Naive thymus-derived CD4-positive, alpha-beta T cell (primary cell): ENCODE measurements at regions of chr10 and their contacts with region 1.

Region 1: GRCh38 chr10:35195361-35196306 is 69.0 kb downstream of the CREM start:
- DNase-seq: peak; percentile 47 to 97 (median 93)
- ATAC-seq: peak; percentile 91
- H3K4me3 ChIP-seq: peak overlapping the region; percentile 65
- H3K4me3 Mint-ChIP-seq: peak overlapping the region; percentile 78 to 95 (median 85)
- H3K27ac ChIP-seq: peak overlapping the region; percentile 98
- H3K27ac Mint-ChIP-seq: peak overlapping the region; percentile 96 to 100 (median 99)
- H3K4me1 ChIP-seq: peaks cover 5 to 7% of the 10 kb centered on the region in 2 donors
- H3K4me1 Mint-ChIP-seq: peaks cover 0 to 56% (median 21%) of the 10 kb centered on the region in 7 donors
- H3K27me3 ChIP-seq: no peaks in the 10 kb centered on the region
- H3K27me3 Mint-ChIP-seq: no peaks in the 10 kb centered on the region

Region 2: DNA sequence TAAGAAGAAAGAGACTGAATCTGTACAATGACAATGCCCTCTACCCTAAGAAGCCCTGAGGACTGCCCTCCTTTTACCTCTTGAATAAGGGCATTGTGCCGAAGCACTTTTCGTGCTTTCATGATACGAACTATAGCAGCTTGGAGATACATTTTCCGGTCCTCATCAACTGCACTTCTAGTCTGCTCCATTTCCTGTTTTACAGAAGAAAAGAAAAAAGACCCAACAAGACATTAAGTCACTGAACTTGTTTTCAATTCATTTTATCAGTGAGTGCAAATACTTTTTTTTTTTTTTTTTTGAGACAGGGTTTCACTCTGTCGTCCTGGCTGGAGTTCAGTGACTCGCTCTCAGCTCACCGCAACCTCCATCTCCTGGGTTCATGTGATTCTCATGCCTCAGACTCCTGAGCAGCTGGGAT is 183.9 kb before region 1 on chr10:
- CTCF ChIA-PET with region 1: no interaction called
- POLR2A ChIA-PET with region 1: no interaction called
- intact Hi-C with region 1: loop called in 1 of 2 experiments (anchors 5 kb)
- DNase-seq: peak in 7 of 9 donors; percentile 31 to 67 (median 59)
- ATAC-seq: peak; percentile 71
- H3K4me3 ChIP-seq: no peak overlapping the region
- H3K4me3 Mint-ChIP-seq: peak overlapping the region in 9 of 10 donors; percentile 46 to 83 (median 69)
- H3K27ac ChIP-seq: peak overlapping the region; percentile 61
- H3K27ac Mint-ChIP-seq: peak overlapping the region; percentile 39 to 98 (median 94)
- H3K4me1 ChIP-seq: peaks cover 0 to 10% of the 10 kb centered on the region in 2 donors
- H3K4me1 Mint-ChIP-seq: peaks cover 0 to 28% (median 17%) of the 10 kb centered on the region in 7 donors
- H3K27me3 ChIP-seq: no peaks in the 10 kb centered on the region
- H3K27me3 Mint-ChIP-seq: no peaks in the 10 kb centered on the region

Region 3: DNA sequence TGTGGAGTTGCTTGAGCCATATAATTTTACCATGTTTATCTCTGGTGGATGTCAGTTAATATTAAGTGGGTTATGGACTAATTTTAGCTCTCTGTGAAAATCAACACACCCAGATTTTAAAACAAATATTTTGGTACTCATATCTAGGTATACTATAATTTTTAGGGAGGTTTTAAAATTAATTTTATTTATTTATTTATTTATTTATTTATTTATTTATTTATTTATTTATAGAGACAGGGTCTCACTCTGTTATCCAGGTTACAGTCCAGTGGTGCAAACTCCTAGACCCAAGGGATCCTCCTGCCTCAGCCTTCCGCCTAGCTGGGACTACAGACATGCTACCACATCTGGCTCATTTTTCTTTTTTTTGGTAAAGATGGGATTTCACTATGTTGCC is 76.3 kb before region 1 on chr10:
- CTCF ChIA-PET with region 1: interaction called, 12 read pairs
- POLR2A ChIA-PET with region 1: interaction called, 6 read pairs
- intact Hi-C with region 1: loop called in 1 of 2 experiments (anchors 1 kb)
- DNase-seq: no peak
- ATAC-seq: no peak
- H3K4me3 ChIP-seq: no peak overlapping the region
- H3K4me3 Mint-ChIP-seq: no peak overlapping the region
- H3K27ac ChIP-seq: no peak overlapping the region
- H3K27ac Mint-ChIP-seq: peak overlapping the region in 1 of 9 donors; percentile 52
- H3K4me1 ChIP-seq: no peaks in the 10 kb centered on the region
- H3K4me1 Mint-ChIP-seq: peaks cover 0 to 13% (median 0%) of the 10 kb centered on the region in 7 donors
- H3K27me3 ChIP-seq: no peaks in the 10 kb centered on the region
- H3K27me3 Mint-ChIP-seq: peaks cover 0 to 10% (median 0%) of the 10 kb centered on the region in 5 donors

Region 4: GRCh38 chr10:35136263-35136815 is 59.3 kb before region 1 on chr10:
- CTCF ChIA-PET with region 1: no interaction called
- POLR2A ChIA-PET with region 1: interaction called, 23 read pairs
- intact Hi-C with region 1: loop called in 1 of 2 experiments (anchors 1 kb)
- DNase-seq: no peak
- ATAC-seq: peak; percentile 59
- H3K4me3 ChIP-seq: no peak overlapping the region
- H3K4me3 Mint-ChIP-seq: peak overlapping the region in 6 of 10 donors; percentile 0 to 65 (median 46)
- H3K27ac ChIP-seq: peak overlapping the region; percentile 14
- H3K27ac Mint-ChIP-seq: peak overlapping the region in 8 of 9 donors; percentile 3 to 87 (median 72)
- H3K4me1 ChIP-seq: peaks cover 17 to 23% of the 10 kb centered on the region in 2 donors
- H3K4me1 Mint-ChIP-seq: peaks cover 23 to 39% (median 35%) of the 10 kb centered on the region in 7 donors
- H3K27me3 ChIP-seq: no peaks in the 10 kb centered on the region
- H3K27me3 Mint-ChIP-seq: no peaks in the 10 kb centered on the region

Region 5: GRCh38 chr10:35208536-35208935 is 12.9 kb after region 1 on chr10:
- CTCF ChIA-PET with region 1: interaction called, 6 read pairs
- POLR2A ChIA-PET with region 1: interaction called, 4 read pairs
- intact Hi-C with region 1: loop called in 1 of 2 experiments (anchors 1 kb)
- DNase-seq: peak in 1 of 9 donors; percentile 41
- ATAC-seq: peak; percentile 46
- H3K4me3 ChIP-seq: no peak overlapping the region
- H3K4me3 Mint-ChIP-seq: peak overlapping the region in 2 of 10 donors; percentile 9 to 85
- H3K27ac ChIP-seq: no peak overlapping the region
- H3K27ac Mint-ChIP-seq: peak overlapping the region in 5 of 9 donors; percentile 28 to 96 (median 54)
- H3K4me1 ChIP-seq: no peaks in the 10 kb centered on the region
- H3K4me1 Mint-ChIP-seq: peaks cover 0 to 60% (median 0%) of the 10 kb centered on the region in 7 donors
- H3K27me3 ChIP-seq: no peaks in the 10 kb centered on the region
- H3K27me3 Mint-ChIP-seq: no peaks in the 10 kb centered on the region

Region 6: GRCh38 chr10:35336084-35336831 is 140.6 kb after region 1 on chr10 and contains the start of gene CCNY:
- CTCF ChIA-PET with region 1: no interaction called
- POLR2A ChIA-PET with region 1: no interaction called
- intact Hi-C with region 1: loop called (anchors 1 kb)
- DNase-seq: peak; percentile 65 to 81 (median 77)
- ATAC-seq: peak; percentile 91
- H3K4me3 ChIP-seq: peak within 1 kb of the TSS; percentile 82
- H3K4me3 Mint-ChIP-seq: peak within 1 kb of the TSS; percentile 85 to 96 (median 90)
- H3K27ac ChIP-seq: peak within 1 kb of the TSS; percentile 92
- H3K27ac Mint-ChIP-seq: peak within 1 kb of the TSS; percentile 81 to 94 (median 90)
- H3K4me1 ChIP-seq: peaks cover 35 to 39% of the 10 kb centered on the region in 2 donors
- H3K4me1 Mint-ChIP-seq: peaks cover 58 to 81% (median 76%) of the 10 kb centered on the region in 7 donors
- H3K27me3 ChIP-seq: no peaks in the 10 kb centered on the region
- H3K27me3 Mint-ChIP-seq: no peaks in the 10 kb centered on the region
- total RNA-seq, gene CCNY: 52.3 to 91.9 (median 68.3) TPM

Region 7: DNA sequence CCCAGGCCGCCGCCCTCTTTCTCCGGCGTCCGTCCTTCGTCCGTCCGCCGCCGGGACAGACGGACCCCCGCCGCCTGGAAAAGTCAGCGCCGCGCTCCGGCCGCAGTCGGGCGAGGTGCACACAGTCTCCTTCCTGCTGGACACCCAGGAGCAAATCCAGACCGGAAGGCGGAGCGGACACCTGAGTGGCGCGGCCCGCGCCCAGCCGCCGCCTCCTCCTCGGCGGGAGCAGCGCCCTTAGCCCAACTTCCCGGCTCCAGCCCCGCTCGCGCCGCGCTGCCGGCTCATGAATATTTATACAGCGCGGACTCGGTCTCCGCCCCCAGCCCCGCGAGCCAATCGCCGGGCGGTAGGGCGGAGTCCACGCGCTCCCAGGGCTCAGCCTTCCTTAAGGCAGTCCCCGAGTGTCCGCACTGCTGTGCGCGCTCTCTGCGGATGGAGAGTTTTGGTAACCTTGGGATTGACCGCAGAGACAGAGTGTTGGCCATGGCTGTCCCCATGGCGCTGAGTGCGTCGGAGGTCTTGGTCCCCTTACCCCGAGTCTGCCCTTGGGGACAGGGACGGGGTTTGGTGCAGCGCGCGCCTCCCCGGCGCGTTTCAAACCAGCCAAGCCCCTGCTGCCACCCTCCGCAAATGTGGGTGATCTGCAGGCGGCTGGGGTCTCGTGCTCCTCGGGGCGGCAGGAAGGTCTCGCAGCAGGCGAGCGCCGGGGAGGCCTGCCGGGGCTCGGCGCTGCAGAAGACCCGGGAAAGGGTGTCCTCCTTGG is 446.6 kb after region 1 on chr10 and contains the start of gene FZD8:
- CTCF ChIA-PET with region 1: no interaction called
- POLR2A ChIA-PET with region 1: no interaction called
- intact Hi-C with region 1: loop called in 1 of 2 experiments (anchors 1 kb)
- DNase-seq: peak; percentile 35 to 77 (median 58)
- ATAC-seq: peak; percentile 87
- H3K4me3 ChIP-seq: peak within 1 kb of the TSS; percentile 80
- H3K4me3 Mint-ChIP-seq: peak within 1 kb of the TSS; percentile 81 to 94 (median 88)
- H3K27ac ChIP-seq: no peak within 1 kb of the TSS
- H3K27ac Mint-ChIP-seq: peak within 1 kb of the TSS in 5 of 9 donors; percentile 4 to 49 (median 42)
- H3K4me1 ChIP-seq: peaks cover 4 to 5% of the 10 kb centered on the region in 2 donors
- H3K4me1 Mint-ChIP-seq: peaks cover 9 to 42% (median 22%) of the 10 kb centered on the region in 7 donors
- H3K27me3 ChIP-seq: peaks cover 3 to 9% of the 10 kb centered on the region in 2 donors
- H3K27me3 Mint-ChIP-seq: peaks cover 7 to 79% (median 26%) of the 10 kb centered on the region in 5 donors
- total RNA-seq, gene FZD8: 0.19 to 1.7 (median 0.47) TPM